A549 (cell line): ENCODE measurements at regions of chr7 and their contacts with region 1.

Region 1: DNA sequence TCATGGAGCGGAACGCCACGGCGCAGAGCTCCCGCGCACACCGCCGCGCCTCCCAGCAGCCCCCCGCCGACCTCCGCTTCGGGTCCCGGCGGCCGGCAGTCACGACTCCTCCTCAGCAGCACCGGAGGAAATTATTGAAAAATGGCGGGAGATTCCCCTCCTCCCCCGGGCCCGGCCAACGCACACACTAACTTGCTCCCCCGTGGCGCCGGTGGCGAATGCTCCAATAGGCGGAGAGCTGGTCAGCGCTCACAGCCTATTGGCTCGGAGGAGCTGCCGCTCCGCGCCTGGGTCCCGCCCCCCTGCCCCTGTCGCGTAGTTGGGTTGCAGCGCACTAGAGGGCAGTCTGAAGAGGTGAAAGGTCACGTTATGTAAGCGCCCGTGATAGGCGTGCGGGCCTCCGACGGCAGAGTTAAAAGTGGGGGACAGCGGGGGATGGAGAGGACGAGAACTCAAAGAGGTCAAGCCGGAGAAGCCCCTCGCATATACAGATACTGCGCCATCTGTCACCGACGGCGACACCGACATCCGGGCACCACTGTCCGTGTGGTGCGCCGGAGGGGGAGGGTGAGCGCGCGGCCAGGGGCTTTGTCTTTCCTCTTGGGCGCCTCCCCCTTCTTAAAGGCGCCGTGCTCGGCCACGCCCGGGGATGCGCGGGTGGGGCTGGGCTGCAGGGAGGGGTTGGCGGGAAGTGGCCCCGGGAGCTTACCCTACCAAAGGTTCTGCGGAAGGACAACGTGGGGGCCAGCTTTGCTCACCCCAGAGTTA is at the start of gene BAZ1B:
- DNase-seq: peak; percentile 98 to 99
- ATAC-seq: peak; percentile 95 to 97
- H3K4me3 ChIP-seq: peak within 1 kb of the TSS; percentile 77
- H3K27ac ChIP-seq: peak within 1 kb of the TSS; percentile 87 to 97
- H3K4me1 ChIP-seq: peaks cover 25% of the 10 kb centered on the region
- CTCF ChIP-seq: no peak
- EP300 ChIP-seq: no peak
- POLR2A ChIP-seq: peak; percentile 38
- RAD21 ChIP-seq: no peak
- polyA plus RNA-seq, gene BAZ1B: 54.8 and 59.0 TPM in 2 replicates

Region 2: DNA sequence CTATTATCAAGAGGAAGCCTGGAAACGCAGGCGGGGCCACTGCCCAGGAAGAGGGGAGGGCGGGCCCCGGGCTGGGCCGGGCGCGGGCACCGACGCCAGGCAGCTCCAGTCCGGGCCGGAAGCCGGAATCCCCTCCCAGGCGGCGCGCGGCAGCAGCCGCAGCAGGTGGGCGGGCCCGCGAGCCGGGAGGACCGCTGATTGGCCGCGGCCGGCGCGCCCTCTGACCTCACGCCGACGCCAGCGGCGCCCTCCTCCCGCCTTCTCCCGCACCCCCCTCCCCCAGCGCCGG is 34.8 kb after region 1 on chr7:
- CTCF ChIA-PET with region 1: no interaction called
- POLR2A ChIA-PET with region 1: interaction called, 16 read pairs
- DNase-seq: peak; percentile 92 to 93
- ATAC-seq: peak; percentile 89 to 94
- H3K4me3 ChIP-seq: peak overlapping the region; percentile 90
- H3K27ac ChIP-seq: peak overlapping the region; percentile 99
- H3K4me1 ChIP-seq: peaks cover 25% of the 10 kb centered on the region
- CTCF ChIP-seq: no peak
- EP300 ChIP-seq: no peak
- POLR2A ChIP-seq: no peak; the same call in 1 of the 2 replicates
- RAD21 ChIP-seq: no peak

Region 3: GRCh38 chr7:73578342-73579127 is 56.2 kb after region 1 on chr7 and contains the start of gene TBL2:
- CTCF ChIA-PET with region 1: no interaction called
- POLR2A ChIA-PET with region 1: interaction called, 12 read pairs
- DNase-seq: peak; percentile 99
- ATAC-seq: peak; percentile 94 to 96
- H3K4me3 ChIP-seq: peak within 1 kb of the TSS; percentile 82
- H3K27ac ChIP-seq: peak within 1 kb of the TSS; percentile 92 to 98
- H3K4me1 ChIP-seq: peaks cover 21% of the 10 kb centered on the region
- CTCF ChIP-seq: no peak; the same call in 2 of the 3 replicates
- EP300 ChIP-seq: no peak
- POLR2A ChIP-seq: peak; percentile 96
- RAD21 ChIP-seq: no peak
- polyA plus RNA-seq, gene TBL2: 34.4 and 38.3 TPM in 2 replicates

Region 4: DNA sequence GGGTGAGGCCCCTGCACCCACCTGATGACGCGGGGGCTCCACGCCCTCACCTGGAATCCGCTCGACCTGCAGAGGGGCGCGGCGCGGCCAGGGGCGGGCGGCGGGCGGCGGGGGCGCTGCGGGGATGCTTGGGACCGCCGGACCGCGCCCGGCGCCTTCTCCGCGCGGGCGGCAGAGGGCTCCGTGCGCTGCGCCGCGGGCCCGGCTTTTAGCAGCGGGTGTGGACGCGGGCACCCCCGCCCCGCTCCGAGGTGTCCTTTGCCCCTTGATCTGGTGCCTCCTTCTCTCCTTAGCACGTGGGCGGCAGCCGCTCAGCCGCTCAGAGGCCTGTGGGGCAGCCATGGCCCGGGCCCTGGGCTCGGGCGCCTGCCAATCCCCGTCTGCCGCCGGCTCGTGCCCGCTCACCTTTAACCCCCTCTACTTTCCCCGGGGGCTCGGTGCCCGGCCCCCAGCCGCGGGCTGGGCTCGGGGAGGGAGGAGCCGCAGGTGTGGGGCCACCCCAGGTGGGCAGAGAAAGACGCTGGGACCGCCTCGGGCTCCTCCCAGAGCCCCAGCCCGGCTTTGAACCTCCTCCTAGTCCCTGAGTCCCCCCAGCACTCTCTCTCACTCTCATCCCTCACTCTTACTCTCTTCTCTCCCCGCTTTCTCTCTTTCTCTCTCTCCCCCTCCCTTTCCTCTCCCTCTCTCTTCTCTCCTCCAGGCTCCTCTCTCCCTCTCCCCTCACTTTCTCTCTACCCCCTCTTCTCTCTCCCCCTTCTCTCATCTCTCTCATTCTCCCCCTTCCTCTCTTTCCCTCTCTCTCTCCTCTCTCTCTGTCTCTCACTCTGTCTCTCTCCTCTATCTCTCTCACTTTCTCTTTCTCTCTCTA is 125.7 kb after region 1 on chr7:
- CTCF ChIA-PET with region 1: no interaction called
- POLR2A ChIA-PET with region 1: no interaction called
- DNase-seq: peak in 1 of 2 experiments; percentile 43
- ATAC-seq: peak; percentile 81 to 84
- H3K4me3 ChIP-seq: peak overlapping the region; percentile 68
- H3K27ac ChIP-seq: peak overlapping the region; percentile 91 to 95
- H3K4me1 ChIP-seq: peaks cover 13% of the 10 kb centered on the region; the same call in 2 of the 3 replicates
- CTCF ChIP-seq: peak; percentile 50
- EP300 ChIP-seq: no peak
- POLR2A ChIP-seq: no peak
- RAD21 ChIP-seq: peak in 1 of 2 experiments; percentile 49; a peak in 1 of 5 replicates